ENCODE measurements at regions of chr4 and their contacts with region 1.

Region 1: DNA sequence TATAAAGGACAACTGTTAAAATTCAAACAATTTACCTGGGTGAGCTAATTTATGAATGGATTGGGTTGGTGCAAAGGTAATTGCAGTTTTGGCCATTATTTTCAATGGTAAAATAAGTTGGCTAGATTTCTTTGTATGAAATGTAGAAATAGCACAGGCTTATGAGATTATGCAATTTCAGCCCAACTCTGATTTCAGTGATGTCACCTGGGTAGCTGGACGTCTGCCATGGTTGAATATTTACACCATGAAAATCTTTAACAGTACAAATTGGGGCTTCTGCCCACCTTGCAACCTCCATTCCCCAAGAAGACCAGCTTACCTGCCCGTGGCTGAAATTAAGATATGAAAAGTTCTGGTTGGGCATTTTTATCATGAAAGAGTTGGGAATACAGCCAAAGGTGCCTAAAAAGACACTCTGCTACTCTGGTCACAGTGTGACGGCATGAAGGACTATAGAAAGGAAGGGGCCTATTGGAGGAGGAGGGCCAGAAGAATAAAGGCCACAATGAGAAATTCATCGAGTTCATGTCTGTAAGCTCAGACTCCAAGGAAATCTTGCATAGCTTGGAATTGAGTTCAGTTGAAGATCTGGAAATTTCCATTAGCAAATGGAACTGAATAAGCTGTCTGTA is 29.7 kb downstream of the EGF start:
- DNase-seq: no peak
- ATAC-seq: peak in 1 of 4 donors; percentile 28
- H3K4me3 ChIP-seq: no peak overlapping the region
- H3K27ac ChIP-seq: no peak overlapping the region
- H3K4me1 ChIP-seq: no peaks in the 10 kb centered on the region
- H3K27me3 ChIP-seq: no peaks in the 10 kb centered on the region
- CTCF ChIP-seq: no peak

Region 2: GRCh38 chr4:109921384-109921808 is 21.0 kb before region 1 on chr4:
- intact Hi-C with region 1: loop called in 1 of 2 experiments (anchors 2 kb)
- DNase-seq: no peak
- ATAC-seq: peak; percentile 74 to 87 (median 82)
- H3K4me3 ChIP-seq: no peak overlapping the region
- H3K27ac ChIP-seq: peak overlapping the region; percentile 18
- H3K4me1 ChIP-seq: peaks cover 21% of the 10 kb centered on the region
- H3K27me3 ChIP-seq: no peaks in the 10 kb centered on the region
- CTCF ChIP-seq: no peak

Measured in psoas muscle (tissue), 8 donors.